Testis (tissue), 5 donors: ENCODE measurements at regions of chr5 and their contacts with region 1.

Region 1: DNA sequence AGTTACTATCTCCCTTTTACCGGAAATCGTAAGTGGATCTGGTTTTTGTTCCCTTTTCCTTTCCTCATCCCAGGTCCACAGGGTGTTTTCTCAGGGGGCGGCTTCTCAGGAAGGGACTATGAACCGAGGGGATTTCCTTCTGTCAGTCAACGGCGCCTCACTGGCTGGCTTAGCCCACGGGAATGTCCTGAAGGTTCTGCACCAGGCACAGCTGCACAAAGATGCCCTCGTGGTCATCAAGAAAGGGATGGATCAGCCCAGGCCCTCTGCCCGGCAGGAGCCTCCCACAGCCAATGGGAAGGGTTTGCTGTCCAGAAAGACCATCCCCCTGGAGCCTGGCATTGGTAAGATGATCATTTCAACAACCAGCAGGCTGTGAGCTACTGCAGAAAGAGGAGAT is 75.8 kb downstream of the GOLPH3 start:
- DNase-seq: no peak
- H3K4me3 ChIP-seq: no peak overlapping the region
- H3K27ac ChIP-seq: peak overlapping the region; percentile 4 to 82
- H3K4me1 ChIP-seq: peaks cover 24% of the 10 kb centered on the region
- H3K27me3 ChIP-seq: no peaks in the 10 kb centered on the region
- CTCF ChIP-seq: no peak
- POLR2A ChIP-seq: no peak

Region 2: DNA sequence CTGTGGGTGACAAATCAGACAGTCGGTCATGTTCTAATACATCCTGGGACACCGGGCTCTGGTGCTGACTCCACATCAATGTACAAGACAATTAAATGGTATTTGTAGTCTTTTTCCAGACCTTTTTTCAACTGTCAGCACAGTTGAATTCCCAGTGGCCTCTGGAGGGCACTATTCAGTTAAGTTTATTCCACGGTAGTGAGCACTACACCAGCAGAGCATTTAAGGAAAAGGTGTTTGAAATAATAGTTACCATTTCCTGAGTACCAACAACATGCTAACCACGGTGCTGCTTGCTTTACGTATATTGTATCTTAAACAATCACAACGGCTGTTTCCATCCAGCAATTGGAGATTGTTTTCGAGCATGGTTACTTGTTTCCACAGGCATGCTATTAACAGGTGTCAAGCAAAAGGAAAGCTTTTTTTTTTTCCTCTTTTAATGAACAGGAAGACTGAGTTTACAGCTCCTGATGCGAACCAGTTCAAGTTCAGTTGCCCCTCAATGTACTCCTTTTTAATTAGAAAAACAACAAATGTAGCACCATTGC is 272.7 kb before region 1 on chr5:
- intact Hi-C with region 1: loop called (anchors 5 kb)
- DNase-seq: peak; percentile 73
- H3K4me3 ChIP-seq: no peak overlapping the region
- H3K27ac ChIP-seq: no peak overlapping the region
- H3K4me1 ChIP-seq: no peaks in the 10 kb centered on the region
- H3K27me3 ChIP-seq: no peaks in the 10 kb centered on the region
- CTCF ChIP-seq: peak; percentile 37 to 77 (median 61)
- POLR2A ChIP-seq: no peak

Region 3: GRCh38 chr5:32147236-32147635 is 48.9 kb after region 1 on chr5:
- intact Hi-C with region 1: no loop called
- DNase-seq: no peak
- H3K4me3 ChIP-seq: no peak overlapping the region
- H3K27ac ChIP-seq: no peak overlapping the region
- H3K4me1 ChIP-seq: peaks cover 19% of the 10 kb centered on the region
- H3K27me3 ChIP-seq: no peaks in the 10 kb centered on the region
- CTCF ChIP-seq: no peak
- POLR2A ChIP-seq: no peak